Activated CD4-positive, alpha-beta T cell treated with anti-CD3 and anti-CD28 coated beads, Interleukin-2, amount 10 ng/mL, durations not matched to agents 24 days and 14 days (primary cell): ENCODE measurements at regions of chr5 and their contacts with region 1.

Region 1: GRCh38 chr5:149636851-149637246 is 55.6 kb downstream of the ARHGEF37 start:
- DNase-seq: peak; percentile 61
- H3K4me3 Mint-ChIP-seq: no peak overlapping the region
- H3K27ac Mint-ChIP-seq: no peak overlapping the region
- H3K4me1 Mint-ChIP-seq: peaks cover 10% of the 10 kb centered on the region
- H3K27me3 Mint-ChIP-seq: no peaks in the 10 kb centered on the region

Region 2: GRCh38 chr5:149215478-149216090 is 421.3 kb before region 1 on chr5:
- intact Hi-C with region 1: no loop called
- DNase-seq: no peak
- H3K4me3 Mint-ChIP-seq: no peak overlapping the region
- H3K27ac Mint-ChIP-seq: no peak overlapping the region
- H3K4me1 Mint-ChIP-seq: no peaks in the 10 kb centered on the region
- H3K27me3 Mint-ChIP-seq: peaks cover 2% of the 10 kb centered on the region

Region 3: DNA sequence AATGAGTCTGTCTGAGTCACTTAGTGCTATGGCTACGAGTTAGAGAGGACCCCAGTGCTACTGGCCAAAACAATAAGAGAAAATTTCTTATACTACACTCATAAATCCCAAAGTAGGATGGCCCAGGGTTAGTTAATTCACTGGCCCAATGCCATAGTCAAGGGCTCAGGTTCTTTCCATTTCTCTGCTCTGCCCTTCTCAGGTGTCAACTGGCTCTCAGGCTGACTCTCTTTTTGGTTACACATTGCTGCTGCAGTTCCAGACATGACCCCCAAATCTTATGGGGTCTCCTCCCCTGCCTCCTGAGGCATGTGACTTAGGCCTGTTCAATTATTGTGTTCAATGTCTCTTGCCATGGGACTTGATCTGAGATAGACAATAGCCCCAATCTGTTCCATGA is 14.8 kb after region 1 on chr5:
- intact Hi-C with region 1: loop called (anchors 2 kb)
- DNase-seq: peak; percentile 68
- H3K4me3 Mint-ChIP-seq: no peak overlapping the region
- H3K27ac Mint-ChIP-seq: no peak overlapping the region
- H3K4me1 Mint-ChIP-seq: no peaks in the 10 kb centered on the region
- H3K27me3 Mint-ChIP-seq: no peaks in the 10 kb centered on the region

Region 4: DNA sequence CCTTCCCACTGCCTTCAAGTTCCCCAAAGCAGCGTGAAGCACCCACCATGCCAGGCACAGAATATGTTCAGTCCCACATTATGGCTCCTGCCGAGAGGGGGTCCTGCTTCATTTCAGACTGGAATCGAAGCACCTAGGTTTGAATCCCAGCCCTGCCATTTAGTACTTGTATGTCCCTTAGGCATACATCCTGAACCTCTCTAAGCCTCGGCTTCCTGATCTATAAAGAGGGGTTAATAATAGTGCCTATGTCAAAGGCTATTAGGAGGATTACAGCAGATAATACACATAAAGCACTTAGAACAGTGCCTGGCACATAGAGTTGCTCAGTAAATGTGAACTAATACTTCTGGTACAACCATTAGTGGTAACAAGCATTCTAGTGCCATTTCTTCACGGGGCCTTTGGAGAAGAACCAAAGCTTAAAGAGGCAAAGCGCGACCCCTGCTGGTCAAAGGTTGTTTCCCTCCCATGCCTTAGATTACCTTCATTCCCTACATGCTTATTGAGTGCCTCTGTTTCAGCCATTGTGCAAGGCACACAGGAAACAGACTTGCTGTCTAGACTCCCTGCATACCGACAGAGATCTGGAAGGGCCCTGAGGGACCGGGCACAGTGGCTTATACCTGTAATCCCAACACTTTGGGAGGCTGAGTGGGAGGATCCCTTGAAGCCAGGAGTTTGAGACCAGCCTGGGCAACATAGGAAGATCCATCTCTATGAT is 191.5 kb after region 1 on chr5:
- intact Hi-C with region 1: loop called (anchors 1 kb)
- DNase-seq: peak; percentile 94
- H3K4me3 Mint-ChIP-seq: no peak overlapping the region
- H3K27ac Mint-ChIP-seq: peak overlapping the region; percentile 16
- H3K4me1 Mint-ChIP-seq: peaks cover 12% of the 10 kb centered on the region
- H3K27me3 Mint-ChIP-seq: no peaks in the 10 kb centered on the region

Region 5: GRCh38 chr5:149990518-149991376 is 353.9 kb after region 1 on chr5:
- intact Hi-C with region 1: loop called (anchors 1 kb)
- DNase-seq: peak; percentile 89
- H3K4me3 Mint-ChIP-seq: no peak overlapping the region
- H3K27ac Mint-ChIP-seq: no peak overlapping the region
- H3K4me1 Mint-ChIP-seq: no peaks in the 10 kb centered on the region
- H3K27me3 Mint-ChIP-seq: no peaks in the 10 kb centered on the region